Naive thymus-derived CD4-positive, alpha-beta T cell (primary cell): ENCODE measurements at regions of chr5 and their contacts with region 1.

Region 1: GRCh38 chr5:91383027-91383955 is at the start of gene ARRDC3:
- DNase-seq: peak; percentile 95 to 98 (median 98)
- ATAC-seq: peak; percentile 58
- H3K4me3 ChIP-seq: peak within 1 kb of the TSS; percentile 81
- H3K4me3 Mint-ChIP-seq: peak within 1 kb of the TSS; percentile 93 to 100 (median 98)
- H3K27ac ChIP-seq: peak within 1 kb of the TSS; percentile 97
- H3K27ac Mint-ChIP-seq: peak within 1 kb of the TSS; percentile 97 to 100 (median 98)
- H3K4me1 ChIP-seq: peaks cover 17 to 19% of the 10 kb centered on the region in 2 donors
- H3K4me1 Mint-ChIP-seq: peaks cover 6 to 32% (median 24%) of the 10 kb centered on the region in 7 donors
- H3K27me3 ChIP-seq: no peaks in the 10 kb centered on the region
- H3K27me3 Mint-ChIP-seq: no peaks in the 10 kb centered on the region
- total RNA-seq, gene ARRDC3: 29.8 to 256 (median 172) TPM

Region 2: DNA sequence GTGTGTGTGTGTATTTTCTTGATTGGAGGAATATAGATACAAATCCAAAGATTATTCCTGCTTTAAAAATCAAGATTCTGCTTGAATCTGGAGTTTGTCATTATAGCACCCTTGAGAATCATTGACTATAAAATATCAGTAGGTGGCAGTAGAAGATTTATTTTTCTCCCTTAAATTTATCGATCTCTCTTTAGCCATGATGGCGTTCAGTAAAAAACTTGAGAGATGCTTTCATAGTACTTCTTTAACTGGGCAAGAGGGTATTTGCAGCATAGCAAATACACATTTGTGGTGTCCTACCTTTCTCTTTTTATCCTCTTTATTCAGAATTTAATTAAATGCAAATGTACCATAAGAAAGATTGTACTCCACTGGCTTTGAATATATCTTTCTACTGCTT is 517.0 kb before region 1 on chr5:
- CTCF ChIA-PET with region 1: interaction called, 42 read pairs
- POLR2A ChIA-PET with region 1: interaction called, 27 read pairs
- intact Hi-C with region 1: loop called (anchors 1 kb)
- DNase-seq: peak in 6 of 9 donors; percentile 11 to 49 (median 38)
- ATAC-seq: peak; percentile 60
- H3K4me3 ChIP-seq: no peak overlapping the region
- H3K4me3 Mint-ChIP-seq: no peak overlapping the region
- H3K27ac ChIP-seq: no peak overlapping the region
- H3K27ac Mint-ChIP-seq: no peak overlapping the region
- H3K4me1 ChIP-seq: peaks cover 0 to 6% of the 10 kb centered on the region in 2 donors
- H3K4me1 Mint-ChIP-seq: peaks cover 0 to 19% (median 9%) of the 10 kb centered on the region in 7 donors
- H3K27me3 ChIP-seq: no peaks in the 10 kb centered on the region
- H3K27me3 Mint-ChIP-seq: peaks cover 0 to 16% (median 4%) of the 10 kb centered on the region in 5 donors

Region 3: GRCh38 chr5:91101600-91102379 is 281.5 kb before region 1 on chr5:
- CTCF ChIA-PET with region 1: interaction called, 4 read pairs
- POLR2A ChIA-PET with region 1: interaction called, 4 read pairs
- intact Hi-C with region 1: loop called in 1 of 2 experiments (anchors 1 kb)
- DNase-seq: peak; percentile 18 to 50 (median 36)
- ATAC-seq: peak; percentile 95
- H3K4me3 ChIP-seq: no peak overlapping the region
- H3K4me3 Mint-ChIP-seq: no peak overlapping the region
- H3K27ac ChIP-seq: no peak overlapping the region
- H3K27ac Mint-ChIP-seq: peak overlapping the region in 2 of 9 donors; percentile 4 to 18
- H3K4me1 ChIP-seq: no peaks in the 10 kb centered on the region
- H3K4me1 Mint-ChIP-seq: peaks cover 0 to 4% (median 0%) of the 10 kb centered on the region in 7 donors
- H3K27me3 ChIP-seq: no peaks in the 10 kb centered on the region
- H3K27me3 Mint-ChIP-seq: peaks cover 0 to 26% (median 0%) of the 10 kb centered on the region in 5 donors

Region 4: GRCh38 chr5:91225848-91226686 is 157.2 kb before region 1 on chr5:
- CTCF ChIA-PET with region 1: interaction called, 180 read pairs
- POLR2A ChIA-PET with region 1: interaction called, 81 read pairs
- intact Hi-C with region 1: loop called (anchors 1 kb)
- DNase-seq: peak; percentile 16 to 60 (median 46)
- ATAC-seq: peak; percentile 67
- H3K4me3 ChIP-seq: no peak overlapping the region
- H3K4me3 Mint-ChIP-seq: no peak overlapping the region
- H3K27ac ChIP-seq: no peak overlapping the region
- H3K27ac Mint-ChIP-seq: no peak overlapping the region
- H3K4me1 ChIP-seq: no peaks in the 10 kb centered on the region
- H3K4me1 Mint-ChIP-seq: no peaks in the 10 kb centered on the region
- H3K27me3 ChIP-seq: no peaks in the 10 kb centered on the region
- H3K27me3 Mint-ChIP-seq: peaks cover 0 to 15% (median 6%) of the 10 kb centered on the region in 5 donors

Region 5: GRCh38 chr5:91280362-91281269 is 102.7 kb before region 1 on chr5:
- CTCF ChIA-PET with region 1: interaction called, 16 read pairs
- POLR2A ChIA-PET with region 1: interaction called, 48 read pairs
- intact Hi-C with region 1: loop called (anchors 1 kb)
- DNase-seq: peak; percentile 45 to 89 (median 63)
- ATAC-seq: peak; percentile 90
- H3K4me3 ChIP-seq: peak overlapping the region; percentile 76
- H3K4me3 Mint-ChIP-seq: peak overlapping the region; percentile 88 to 99 (median 92)
- H3K27ac ChIP-seq: peak overlapping the region; percentile 41
- H3K27ac Mint-ChIP-seq: peak overlapping the region; percentile 74 to 94 (median 91)
- H3K4me1 ChIP-seq: peaks cover 0 to 4% of the 10 kb centered on the region in 2 donors
- H3K4me1 Mint-ChIP-seq: peaks cover 13 to 34% (median 23%) of the 10 kb centered on the region in 7 donors
- H3K27me3 ChIP-seq: no peaks in the 10 kb centered on the region
- H3K27me3 Mint-ChIP-seq: peaks cover 0 to 13% (median 0%) of the 10 kb centered on the region in 5 donors

Region 6: GRCh38 chr5:91419571-91420537 is 36.6 kb after region 1 on chr5:
- CTCF ChIA-PET with region 1: interaction called, 65 read pairs
- POLR2A ChIA-PET with region 1: interaction called, 8 read pairs
- intact Hi-C with region 1: loop called (anchors 1 kb)
- DNase-seq: peak; percentile 40 to 72 (median 58)
- ATAC-seq: peak; percentile 60
- H3K4me3 ChIP-seq: no peak overlapping the region
- H3K4me3 Mint-ChIP-seq: peak overlapping the region in 1 of 10 donors; percentile 15
- H3K27ac ChIP-seq: no peak overlapping the region
- H3K27ac Mint-ChIP-seq: no peak overlapping the region
- H3K4me1 ChIP-seq: no peaks in the 10 kb centered on the region
- H3K4me1 Mint-ChIP-seq: peaks cover 0 to 30% (median 20%) of the 10 kb centered on the region in 7 donors
- H3K27me3 ChIP-seq: no peaks in the 10 kb centered on the region
- H3K27me3 Mint-ChIP-seq: peaks cover 0 to 5% (median 0%) of the 10 kb centered on the region in 5 donors

Region 7: GRCh38 chr5:91449083-91449482 is 65.8 kb after region 1 on chr5:
- CTCF ChIA-PET with region 1: no interaction called
- POLR2A ChIA-PET with region 1: no interaction called
- intact Hi-C with region 1: no loop called
- DNase-seq: no peak
- ATAC-seq: no peak
- H3K4me3 ChIP-seq: no peak overlapping the region
- H3K4me3 Mint-ChIP-seq: no peak overlapping the region
- H3K27ac ChIP-seq: no peak overlapping the region
- H3K27ac Mint-ChIP-seq: no peak overlapping the region
- H3K4me1 ChIP-seq: no peaks in the 10 kb centered on the region
- H3K4me1 Mint-ChIP-seq: peaks cover 0 to 11% (median 9%) of the 10 kb centered on the region in 7 donors
- H3K27me3 ChIP-seq: no peaks in the 10 kb centered on the region
- H3K27me3 Mint-ChIP-seq: no peaks in the 10 kb centered on the region

Region 8: GRCh38 chr5:91486638-91487037 is 103.3 kb after region 1 on chr5:
- CTCF ChIA-PET with region 1: no interaction called
- POLR2A ChIA-PET with region 1: no interaction called
- intact Hi-C with region 1: no loop called
- DNase-seq: no peak
- ATAC-seq: no peak
- H3K4me3 ChIP-seq: no peak overlapping the region
- H3K4me3 Mint-ChIP-seq: no peak overlapping the region
- H3K27ac ChIP-seq: no peak overlapping the region
- H3K27ac Mint-ChIP-seq: no peak overlapping the region
- H3K4me1 ChIP-seq: no peaks in the 10 kb centered on the region
- H3K4me1 Mint-ChIP-seq: peaks cover 0 to 11% (median 0%) of the 10 kb centered on the region in 7 donors
- H3K27me3 ChIP-seq: no peaks in the 10 kb centered on the region
- H3K27me3 Mint-ChIP-seq: peaks cover 0 to 6% (median 0%) of the 10 kb centered on the region in 5 donors

Region 9: GRCh38 chr5:91641730-91642350 is 258.5 kb after region 1 on chr5:
- CTCF ChIA-PET with region 1: no interaction called
- POLR2A ChIA-PET with region 1: no interaction called
- intact Hi-C with region 1: no loop called
- DNase-seq: peak in 5 of 9 donors; percentile 1 to 27 (median 13)
- ATAC-seq: no peak
- H3K4me3 ChIP-seq: no peak overlapping the region
- H3K4me3 Mint-ChIP-seq: no peak overlapping the region
- H3K27ac ChIP-seq: no peak overlapping the region
- H3K27ac Mint-ChIP-seq: no peak overlapping the region
- H3K4me1 ChIP-seq: no peaks in the 10 kb centered on the region
- H3K4me1 Mint-ChIP-seq: no peaks in the 10 kb centered on the region
- H3K27me3 ChIP-seq: no peaks in the 10 kb centered on the region
- H3K27me3 Mint-ChIP-seq: peaks cover 0 to 11% (median 4%) of the 10 kb centered on the region in 5 donors

Region 10: GRCh38 chr5:92552206-92553160 is 1169.2 kb after region 1 on chr5:
- CTCF ChIA-PET with region 1: no interaction called
- POLR2A ChIA-PET with region 1: no interaction called
- intact Hi-C with region 1: no loop called
- DNase-seq: no peak
- ATAC-seq: no peak
- H3K4me3 ChIP-seq: no peak overlapping the region
- H3K4me3 Mint-ChIP-seq: no peak overlapping the region
- H3K27ac ChIP-seq: no peak overlapping the region
- H3K27ac Mint-ChIP-seq: no peak overlapping the region
- H3K4me1 ChIP-seq: no peaks in the 10 kb centered on the region
- H3K4me1 Mint-ChIP-seq: no peaks in the 10 kb centered on the region
- H3K27me3 ChIP-seq: no peaks in the 10 kb centered on the region
- H3K27me3 Mint-ChIP-seq: no peaks in the 10 kb centered on the region